ENCODE measurements at regions of chr10 and their contacts with region 1.

Region 1: DNA sequence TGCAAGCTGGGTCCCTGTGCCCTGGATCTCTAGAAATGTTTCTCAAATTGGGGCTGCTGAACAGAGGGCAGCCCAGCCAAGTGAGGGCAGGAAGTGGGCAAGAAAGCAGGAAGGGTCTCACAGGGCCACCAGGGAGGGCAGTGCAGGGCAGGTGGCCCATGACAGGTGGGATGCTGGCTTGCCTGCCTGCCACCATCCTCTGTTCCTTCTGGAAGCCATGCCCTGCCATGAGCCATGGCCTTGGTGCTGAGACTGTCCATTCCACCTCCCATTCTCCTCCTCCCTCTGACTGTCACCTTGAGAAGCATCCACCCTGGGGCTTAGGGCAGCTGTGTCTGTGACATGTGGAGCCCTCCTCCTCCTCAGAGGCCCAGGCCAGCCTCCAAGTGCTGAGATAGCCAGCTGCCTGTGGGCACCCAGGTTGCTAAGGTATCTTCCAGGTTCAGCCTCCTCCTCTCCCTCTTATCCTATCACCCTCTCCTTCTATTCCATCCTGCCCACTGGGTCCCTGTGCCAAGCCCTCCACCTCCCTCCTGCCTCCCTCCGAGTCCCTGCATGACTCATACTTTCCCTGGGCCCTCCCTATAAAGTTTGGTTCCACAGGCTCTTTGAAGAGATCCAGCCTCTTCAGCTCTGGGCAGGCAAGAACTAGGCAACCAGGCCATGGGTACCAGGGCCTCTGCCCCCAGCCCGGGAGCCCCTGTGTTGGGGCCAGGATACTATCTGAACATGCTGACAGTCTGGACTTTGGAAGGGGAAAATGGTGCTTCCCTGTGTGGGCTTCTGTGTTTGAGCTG is 1.3 kb downstream of the VSIR start:
- DNase-seq: peak; percentile 76
- H3K4me3 Mint-ChIP-seq: peak overlapping the region; percentile 88
- H3K27ac Mint-ChIP-seq: peak overlapping the region; percentile 98
- H3K4me1 Mint-ChIP-seq: peaks cover 73% of the 10 kb centered on the region
- H3K27me3 Mint-ChIP-seq: no peaks in the 10 kb centered on the region

Region 2: GRCh38 chr10:71270301-71271220 is 501.5 kb before region 1 on chr10:
- CTCF ChIA-PET with region 1: no interaction called
- intact Hi-C with region 1: no loop called
- DNase-seq: peak; percentile 61
- H3K4me3 Mint-ChIP-seq: no peak overlapping the region
- H3K27ac Mint-ChIP-seq: no peak overlapping the region
- H3K4me1 Mint-ChIP-seq: peaks cover 2% of the 10 kb centered on the region
- H3K27me3 Mint-ChIP-seq: no peaks in the 10 kb centered on the region

Region 3: GRCh38 chr10:71319042-71319799 is 452.8 kb before region 1 on chr10 and contains the start of gene SLC29A3:
- CTCF ChIA-PET with region 1: no interaction called
- intact Hi-C with region 1: loop called (anchors 1 kb)
- DNase-seq: peak; percentile 92
- H3K4me3 Mint-ChIP-seq: peak within 1 kb of the TSS; percentile 93
- H3K27ac Mint-ChIP-seq: peak within 1 kb of the TSS; percentile 18
- H3K4me1 Mint-ChIP-seq: peaks cover 35% of the 10 kb centered on the region
- H3K27me3 Mint-ChIP-seq: no peaks in the 10 kb centered on the region
- total RNA-seq, gene SLC29A3: 1.2 to 1.5 TPM

Region 4: DNA sequence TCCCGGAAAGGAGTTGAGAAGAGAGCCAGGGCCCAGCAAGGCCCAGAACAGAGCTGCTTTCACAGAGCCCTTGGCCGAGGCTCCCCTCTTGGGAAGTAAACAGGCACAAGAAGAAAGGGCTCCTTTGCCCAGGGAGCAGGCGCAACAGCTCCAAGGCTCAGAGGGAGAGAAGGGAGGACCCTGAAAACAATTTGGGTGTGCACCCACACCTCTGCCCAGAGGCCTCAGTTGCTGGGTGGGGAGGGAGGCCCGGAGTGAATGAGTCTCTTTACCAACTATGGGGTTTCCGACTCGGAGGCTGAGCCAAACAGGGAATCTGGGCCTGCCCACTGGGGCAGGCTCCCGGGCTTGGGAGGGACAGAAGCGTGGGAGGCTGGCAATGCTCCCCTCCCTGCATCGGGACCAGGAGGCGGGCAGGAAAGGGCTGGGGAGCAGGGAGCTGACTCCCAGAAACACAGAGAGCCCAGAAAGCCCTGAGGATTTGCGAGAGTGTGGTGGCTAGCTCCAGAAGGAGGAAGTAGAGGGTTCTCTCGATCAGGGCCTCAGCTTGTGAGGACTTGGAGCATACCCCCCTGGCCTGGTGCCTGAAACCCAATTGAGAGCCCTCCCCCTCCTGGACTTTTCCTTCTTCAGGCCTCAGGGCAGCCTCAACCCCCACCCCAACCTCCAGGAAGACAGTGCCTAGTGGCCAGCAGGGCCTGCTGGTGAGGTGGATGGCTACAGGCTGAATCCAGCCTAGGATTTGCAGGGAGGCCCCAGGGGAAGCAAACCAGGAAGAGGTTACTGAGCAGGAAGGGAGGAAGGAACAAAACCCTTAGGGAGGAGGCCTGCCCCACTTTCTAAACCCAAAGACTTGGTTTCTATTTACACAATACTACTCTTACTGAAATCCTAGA is 58.6 kb before region 1 on chr10:
- CTCF ChIA-PET with region 1: interaction called, 36 read pairs
- intact Hi-C with region 1: loop called (anchors 1 kb)
- DNase-seq: peak; percentile 54
- H3K4me3 Mint-ChIP-seq: peak overlapping the region; percentile 67
- H3K27ac Mint-ChIP-seq: peak overlapping the region; percentile 94
- H3K4me1 Mint-ChIP-seq: peaks cover 64% of the 10 kb centered on the region
- H3K27me3 Mint-ChIP-seq: no peaks in the 10 kb centered on the region

Region 5: GRCh38 chr10:71748671-71749191 is 23.3 kb before region 1 on chr10:
- CTCF ChIA-PET with region 1: interaction called, 47 read pairs
- intact Hi-C with region 1: loop called (anchors 1 kb)
- DNase-seq: peak; percentile 90
- H3K4me3 Mint-ChIP-seq: peak overlapping the region; percentile 64
- H3K27ac Mint-ChIP-seq: peak overlapping the region; percentile 98
- H3K4me1 Mint-ChIP-seq: peaks cover 94% of the 10 kb centered on the region
- H3K27me3 Mint-ChIP-seq: no peaks in the 10 kb centered on the region

Region 6: GRCh38 chr10:71812016-71812912 is 40.2 kb after region 1 on chr10:
- CTCF ChIA-PET with region 1: interaction called, 13 read pairs
- intact Hi-C with region 1: loop called (anchors 2 kb)
- DNase-seq: peak; percentile 83
- H3K4me3 Mint-ChIP-seq: no peak overlapping the region
- H3K27ac Mint-ChIP-seq: no peak overlapping the region
- H3K4me1 Mint-ChIP-seq: peaks cover 2% of the 10 kb centered on the region
- H3K27me3 Mint-ChIP-seq: no peaks in the 10 kb centered on the region

Region 7: DNA sequence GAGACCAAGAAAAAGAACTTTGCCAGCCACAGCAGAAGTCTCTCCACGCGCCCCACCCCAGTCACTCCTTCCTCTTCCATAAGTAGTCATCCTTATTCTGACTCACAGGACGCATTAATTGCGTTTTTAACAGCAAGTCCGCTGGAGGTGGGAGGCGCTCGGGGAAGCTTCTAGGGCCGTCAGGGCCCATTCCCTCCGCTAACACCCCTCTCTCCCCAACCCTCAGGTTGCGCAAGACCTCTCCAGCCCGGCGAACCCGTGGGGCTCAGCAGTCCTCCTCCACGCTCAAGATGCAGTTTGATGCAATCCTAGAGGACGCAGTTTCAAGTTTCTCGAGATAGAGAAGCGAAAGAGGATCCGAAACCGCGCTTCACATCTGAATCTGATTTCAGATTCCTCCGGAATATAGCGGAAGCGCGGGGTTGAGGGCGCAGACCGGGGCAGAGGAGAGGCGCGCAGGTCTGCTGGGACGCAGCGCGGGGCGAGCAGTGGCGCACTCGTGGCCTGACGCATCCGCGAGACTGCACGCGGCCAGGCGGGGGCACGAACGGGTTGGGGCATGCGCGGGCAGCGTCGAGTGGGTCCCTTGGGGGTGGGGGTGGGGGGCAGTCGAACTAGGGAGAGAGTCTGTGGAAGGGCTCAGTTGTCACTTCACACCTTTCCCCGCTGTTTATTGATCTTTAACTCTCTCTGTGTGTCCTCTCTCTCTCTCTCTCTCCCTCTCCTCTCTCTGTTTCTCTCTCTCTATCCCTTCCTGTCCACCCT is 116.8 kb after region 1 on chr10:
- CTCF ChIA-PET with region 1: no interaction called
- intact Hi-C with region 1: loop called (anchors 2 kb)
- DNase-seq: peak; percentile 80
- H3K4me3 Mint-ChIP-seq: peak overlapping the region; percentile 78
- H3K27ac Mint-ChIP-seq: peak overlapping the region; percentile 24
- H3K4me1 Mint-ChIP-seq: peaks cover 13% of the 10 kb centered on the region
- H3K27me3 Mint-ChIP-seq: no peaks in the 10 kb centered on the region

Measured in activated naive CD4-positive, alpha-beta T cell treated with anti-CD3 and anti-CD28 coated beads for 36 hours (primary cell).